Gastrocnemius medialis (tissue), 4 donors: ENCODE measurements at regions of chr10 and their contacts with region 1.

Region 1: GRCh38 chr10:132560241-132560731 is 22.7 kb downstream of the INPP5A start:
- DNase-seq: no peak
- ATAC-seq: peak in 1 of 2 donors; percentile 14
- H3K4me3 ChIP-seq: no peak overlapping the region
- H3K27ac ChIP-seq: no peak overlapping the region
- H3K4me1 ChIP-seq: peaks cover 5 to 11% of the 10 kb centered on the region in 2 donors
- H3K27me3 ChIP-seq: no peaks in the 10 kb centered on the region
- CTCF ChIP-seq: no peak
- POLR2A ChIP-seq: no peak

Region 2: GRCh38 chr10:131546086-131546810 is 1014.0 kb before region 1 on chr10:
- in situ Hi-C with region 1: no loop called
- intact Hi-C with region 1: no loop called
- DNase-seq: no peak
- ATAC-seq: no peak
- H3K4me3 ChIP-seq: no peak overlapping the region
- H3K27ac ChIP-seq: no peak overlapping the region
- H3K4me1 ChIP-seq: no peaks in the 10 kb centered on the region
- H3K27me3 ChIP-seq: peaks cover 0 to 4% (median 0%) of the 10 kb centered on the region in 3 donors
- CTCF ChIP-seq: no peak
- POLR2A ChIP-seq: no peak

Region 3: GRCh38 chr10:132347211-132347930 is 212.9 kb before region 1 on chr10:
- in situ Hi-C with region 1: no loop called
- intact Hi-C with region 1: no loop called
- DNase-seq: no peak
- ATAC-seq: no peak
- H3K4me3 ChIP-seq: no peak overlapping the region
- H3K27ac ChIP-seq: no peak overlapping the region
- H3K4me1 ChIP-seq: no peaks in the 10 kb centered on the region
- H3K27me3 ChIP-seq: no peaks in the 10 kb centered on the region
- CTCF ChIP-seq: no peak
- POLR2A ChIP-seq: no peak

Region 4: DNA sequence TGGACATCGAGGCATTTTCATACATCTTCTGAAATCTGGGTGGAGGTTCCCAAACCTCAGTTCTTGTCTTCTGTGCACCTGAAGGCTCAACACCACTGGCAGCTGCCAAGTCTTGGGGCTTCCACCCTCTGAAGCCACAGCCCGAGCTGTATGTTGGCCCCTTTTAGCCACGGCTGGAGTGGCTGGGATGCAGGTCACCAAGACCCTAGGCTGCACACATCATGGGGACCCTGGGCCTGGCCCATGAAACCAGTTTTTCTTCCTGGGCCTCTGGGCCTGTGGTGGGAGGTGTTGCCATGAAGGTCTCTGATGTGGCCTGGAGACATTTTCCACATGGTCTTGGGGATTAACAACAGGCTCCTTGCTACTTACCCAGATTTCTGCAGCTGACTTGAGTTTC is 39.4 kb after region 1 on chr10:
- in situ Hi-C with region 1: no loop called
- intact Hi-C with region 1: loop called (anchors 2 kb)
- DNase-seq: no peak
- ATAC-seq: no peak
- H3K4me3 ChIP-seq: no peak overlapping the region
- H3K27ac ChIP-seq: no peak overlapping the region
- H3K4me1 ChIP-seq: peaks cover 26% of the 10 kb centered on the region in 2 donors
- H3K27me3 ChIP-seq: no peaks in the 10 kb centered on the region
- CTCF ChIP-seq: no peak
- POLR2A ChIP-seq: no peak